Activated B cell treated with CpG ODN at 0.5 μM for 24 hours (primary cell): ENCODE measurements at regions of chr2 and their contacts with region 1.

Region 1: DNA sequence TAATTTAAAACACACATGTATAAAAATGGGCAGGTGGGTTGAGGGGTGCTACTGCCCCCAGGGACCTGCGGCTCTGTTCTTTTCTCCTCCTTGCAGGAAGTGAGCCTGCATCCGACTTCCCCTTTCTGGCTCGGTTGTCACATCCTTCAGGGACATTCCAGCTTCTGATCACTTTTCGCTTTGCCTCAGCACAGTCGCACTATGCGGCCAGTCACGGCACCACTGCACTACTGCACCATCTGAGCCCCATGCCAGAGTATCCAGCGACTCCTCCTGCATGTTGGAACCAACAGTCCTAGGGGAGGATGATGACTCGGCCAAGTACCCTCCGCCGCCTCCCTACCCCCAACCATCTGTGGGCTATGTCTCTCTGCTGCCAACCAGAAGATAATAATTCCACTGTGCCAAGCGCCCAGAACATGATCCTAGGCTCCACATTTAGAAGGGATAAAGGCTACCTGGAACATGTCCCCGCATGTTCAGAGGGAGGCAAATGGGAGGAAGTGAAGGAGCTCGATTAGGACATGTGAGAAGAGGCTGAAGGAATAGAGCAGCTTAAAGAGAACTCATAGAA is 17.6 kb downstream of the CDC42EP3 start:
- DNase-seq: peak; percentile 52
- ATAC-seq: peak; percentile 62
- H3K4me3 Mint-ChIP-seq: peak overlapping the region; percentile 67
- H3K27ac Mint-ChIP-seq: peak overlapping the region; percentile 78
- H3K4me1 Mint-ChIP-seq: peaks cover 95% of the 10 kb centered on the region
- H3K27me3 Mint-ChIP-seq: no peaks in the 10 kb centered on the region
- CTCF ChIP-seq: no peak

Region 2: DNA sequence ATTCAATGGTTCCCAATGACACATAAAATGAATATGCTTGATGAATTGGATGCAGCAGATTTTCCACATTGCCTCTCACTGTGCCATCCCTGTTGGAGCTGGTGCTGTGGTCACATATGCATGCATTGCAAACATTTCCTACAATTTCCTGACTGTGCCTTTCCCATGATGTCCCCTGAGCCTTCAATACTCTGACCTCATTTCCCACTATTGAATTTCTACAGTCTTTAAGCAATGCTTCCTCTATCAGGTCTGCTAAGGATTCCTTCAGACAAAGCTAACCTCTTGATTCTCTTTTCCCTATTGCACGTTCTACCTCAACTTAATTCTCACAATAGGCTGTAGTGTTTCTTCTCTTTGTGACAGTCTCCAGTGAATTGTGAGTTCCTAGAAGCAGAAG is 1640.8 kb before region 1 on chr2:
- CTCF ChIA-PET with region 1: no interaction called
- POLR2A ChIA-PET with region 1: no interaction called
- intact Hi-C with region 1: no loop called
- DNase-seq: no peak
- ATAC-seq: no peak
- H3K4me3 Mint-ChIP-seq: no peak overlapping the region
- H3K27ac Mint-ChIP-seq: no peak overlapping the region
- H3K4me1 Mint-ChIP-seq: no peaks in the 10 kb centered on the region
- H3K27me3 Mint-ChIP-seq: no peaks in the 10 kb centered on the region
- CTCF ChIP-seq: no peak

Region 3: GRCh38 chr2:37600735-37601134 is 53.2 kb before region 1 on chr2:
- CTCF ChIA-PET with region 1: no interaction called
- POLR2A ChIA-PET with region 1: interaction called, 3 read pairs
- intact Hi-C with region 1: loop called (anchors 5 kb)
- DNase-seq: no peak
- ATAC-seq: peak; percentile 85
- H3K4me3 Mint-ChIP-seq: peak overlapping the region; percentile 60
- H3K27ac Mint-ChIP-seq: peak overlapping the region; percentile 37
- H3K4me1 Mint-ChIP-seq: peaks cover 33% of the 10 kb centered on the region
- H3K27me3 Mint-ChIP-seq: no peaks in the 10 kb centered on the region
- CTCF ChIP-seq: no peak

Region 4: DNA sequence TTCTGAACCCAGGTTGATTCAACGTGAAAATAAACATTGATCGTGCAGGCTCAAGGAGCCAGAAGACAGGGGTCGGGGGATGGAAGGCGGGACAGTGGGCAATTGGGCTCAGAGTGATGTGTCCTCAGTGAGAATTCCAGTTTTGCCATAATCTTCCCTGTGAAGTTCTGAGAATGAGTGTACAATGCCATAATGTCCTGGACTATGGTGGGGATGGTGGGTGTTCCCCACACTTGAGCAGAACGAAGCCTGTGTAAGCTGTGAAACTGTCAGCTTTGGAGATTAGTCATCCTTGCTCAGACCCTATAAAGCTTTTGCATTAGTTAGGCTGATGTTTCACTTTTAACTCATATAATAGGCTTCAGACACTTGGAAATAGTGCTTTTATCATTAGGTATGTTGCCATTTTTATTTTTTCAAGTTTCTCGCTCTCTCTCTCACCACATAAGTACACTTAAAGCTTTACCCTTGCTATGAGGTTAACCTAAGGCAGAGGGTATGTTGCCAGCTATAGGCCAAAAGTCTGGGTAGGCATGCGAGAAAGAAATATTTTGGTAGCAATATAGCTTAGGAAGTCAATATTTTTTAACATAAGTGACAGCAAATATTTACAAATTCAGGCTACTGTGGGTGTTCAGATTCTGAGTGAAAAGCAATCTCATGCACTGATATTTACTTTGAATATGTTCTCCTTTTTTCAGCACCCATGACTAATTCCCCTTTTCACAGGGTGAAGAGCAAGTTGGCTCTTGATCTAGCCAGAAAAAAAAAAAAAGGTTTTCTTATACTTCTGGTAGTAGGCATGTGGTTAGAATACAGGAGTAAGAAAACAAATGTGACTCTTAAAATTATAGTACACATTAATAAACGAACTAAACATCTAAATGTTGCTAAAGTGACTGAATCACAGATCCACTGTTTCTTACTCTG is 29.7 kb before region 1 on chr2:
- CTCF ChIA-PET with region 1: interaction called, 10 read pairs
- POLR2A ChIA-PET with region 1: interaction called, 36 read pairs
- intact Hi-C with region 1: loop called (anchors 1 kb)
- DNase-seq: no peak
- ATAC-seq: peak; percentile 82
- H3K4me3 Mint-ChIP-seq: peak overlapping the region; percentile 64
- H3K27ac Mint-ChIP-seq: peak overlapping the region; percentile 89
- H3K4me1 Mint-ChIP-seq: peaks cover 70% of the 10 kb centered on the region
- H3K27me3 Mint-ChIP-seq: no peaks in the 10 kb centered on the region
- CTCF ChIP-seq: no peak

Region 5: DNA sequence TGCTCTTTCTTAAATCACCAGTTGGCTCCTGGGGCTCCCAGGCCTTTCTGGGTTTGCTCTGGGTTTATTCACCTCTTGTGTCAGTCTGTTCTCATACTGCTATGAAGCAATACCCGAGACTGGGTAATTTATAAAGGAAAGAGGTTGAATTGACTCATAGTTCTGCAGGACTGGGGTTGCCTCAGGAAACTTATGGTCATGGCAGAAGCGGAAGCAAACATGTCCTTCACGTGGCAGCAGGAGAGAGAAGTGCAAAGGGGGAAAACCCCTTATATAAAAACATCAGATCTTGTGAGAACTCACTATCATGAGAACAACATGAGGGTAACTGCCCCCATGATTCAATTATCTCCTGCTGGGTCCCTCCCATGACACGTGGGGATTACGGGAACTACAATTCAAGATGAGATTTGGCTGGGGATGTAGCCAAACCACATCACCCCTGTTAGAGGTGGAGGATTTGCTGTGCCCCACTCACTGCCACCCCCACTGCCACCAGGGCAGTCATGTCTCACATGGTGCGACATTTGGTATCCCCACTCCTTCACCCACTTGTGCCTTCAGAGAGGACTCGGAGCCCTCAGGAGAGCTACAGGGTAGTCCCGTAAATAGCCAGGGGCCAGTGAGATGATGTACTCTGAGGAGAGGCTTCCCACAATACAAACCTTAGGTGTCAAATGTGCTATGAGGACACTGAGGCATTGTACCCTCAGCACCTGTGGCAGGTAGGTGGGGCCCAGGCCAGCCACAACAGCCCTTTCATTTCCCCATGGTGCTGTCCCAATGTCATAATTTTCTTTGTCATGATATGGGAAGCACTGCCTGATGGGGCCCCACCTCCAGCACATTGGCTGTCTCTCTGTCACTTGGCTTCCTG is 18.1 kb before region 1 on chr2:
- CTCF ChIA-PET with region 1: interaction called, 3 read pairs
- POLR2A ChIA-PET with region 1: interaction called, 10 read pairs
- intact Hi-C with region 1: loop called (anchors 1 kb)
- DNase-seq: peak; percentile 44
- ATAC-seq: peak; percentile 84
- H3K4me3 Mint-ChIP-seq: peak overlapping the region; percentile 52
- H3K27ac Mint-ChIP-seq: peak overlapping the region; percentile 95
- H3K4me1 Mint-ChIP-seq: peaks cover 50% of the 10 kb centered on the region
- H3K27me3 Mint-ChIP-seq: no peaks in the 10 kb centered on the region
- CTCF ChIP-seq: no peak

Region 6: GRCh38 chr2:37641582-37642171 is 12.2 kb before region 1 on chr2:
- CTCF ChIA-PET with region 1: interaction called, 3 read pairs
- POLR2A ChIA-PET with region 1: interaction called, 12 read pairs
- intact Hi-C with region 1: loop called (anchors 1 kb)
- DNase-seq: no peak
- ATAC-seq: no peak
- H3K4me3 Mint-ChIP-seq: no peak overlapping the region
- H3K27ac Mint-ChIP-seq: no peak overlapping the region
- H3K4me1 Mint-ChIP-seq: peaks cover 64% of the 10 kb centered on the region
- H3K27me3 Mint-ChIP-seq: no peaks in the 10 kb centered on the region
- CTCF ChIP-seq: no peak

Region 7: GRCh38 chr2:37665604-37666362 is 11.9 kb after region 1 on chr2:
- CTCF ChIA-PET with region 1: interaction called, 3 read pairs
- POLR2A ChIA-PET with region 1: interaction called, 106 read pairs
- intact Hi-C with region 1: loop called (anchors 1 kb)
- DNase-seq: no peak
- ATAC-seq: no peak
- H3K4me3 Mint-ChIP-seq: no peak overlapping the region
- H3K27ac Mint-ChIP-seq: peak overlapping the region; percentile 59
- H3K4me1 Mint-ChIP-seq: peaks cover 83% of the 10 kb centered on the region
- H3K27me3 Mint-ChIP-seq: no peaks in the 10 kb centered on the region
- CTCF ChIP-seq: no peak

Region 8: GRCh38 chr2:37672104-37672869 is 18.4 kb after region 1 on chr2:
- CTCF ChIA-PET with region 1: interaction called, 3 read pairs
- POLR2A ChIA-PET with region 1: interaction called, 106 read pairs
- intact Hi-C with region 1: loop called (anchors 1 kb)
- DNase-seq: peak; percentile 68
- ATAC-seq: peak; percentile 54
- H3K4me3 Mint-ChIP-seq: peak overlapping the region; percentile 90
- H3K27ac Mint-ChIP-seq: peak overlapping the region; percentile 84
- H3K4me1 Mint-ChIP-seq: peaks cover 50% of the 10 kb centered on the region
- H3K27me3 Mint-ChIP-seq: no peaks in the 10 kb centered on the region
- CTCF ChIP-seq: no peak

Region 9: GRCh38 chr2:37740164-37740739 is 86.4 kb after region 1 on chr2:
- CTCF ChIA-PET with region 1: no interaction called
- POLR2A ChIA-PET with region 1: no interaction called
- intact Hi-C with region 1: no loop called
- DNase-seq: no peak
- ATAC-seq: no peak
- H3K4me3 Mint-ChIP-seq: no peak overlapping the region
- H3K27ac Mint-ChIP-seq: no peak overlapping the region
- H3K4me1 Mint-ChIP-seq: no peaks in the 10 kb centered on the region
- H3K27me3 Mint-ChIP-seq: no peaks in the 10 kb centered on the region
- CTCF ChIP-seq: no peak